ENCODE measurements at regions of chr2 and their contacts with region 1.

Region 1: GRCh38 chr2:203824057-203824456 is 43.5 kb upstream of the CTLA4 start:
- DNase-seq: no peak
- H3K4me3 ChIP-seq: no peak overlapping the region
- H3K27ac ChIP-seq: no peak overlapping the region
- H3K4me1 ChIP-seq: no peaks in the 10 kb centered on the region
- H3K27me3 ChIP-seq: no peaks in the 10 kb centered on the region
- CTCF ChIP-seq: no peak
- EP300 ChIP-seq: no peak
- POLR2A ChIP-seq: no peak

Region 2: GRCh38 chr2:203800783-203801182 is 23.3 kb before region 1 on chr2:
- in situ Hi-C with region 1: no loop called
- intact Hi-C with region 1: loop called (anchors 1 kb)
- DNase-seq: no peak
- H3K4me3 ChIP-seq: no peak overlapping the region
- H3K27ac ChIP-seq: no peak overlapping the region
- H3K4me1 ChIP-seq: no peaks in the 10 kb centered on the region
- H3K27me3 ChIP-seq: no peaks in the 10 kb centered on the region
- CTCF ChIP-seq: no peak
- EP300 ChIP-seq: no peak
- POLR2A ChIP-seq: no peak